Cardiac septum (tissue), 1 donor: ENCODE measurements at regions of chr1 and their contacts with region 1.

Region 1: DNA sequence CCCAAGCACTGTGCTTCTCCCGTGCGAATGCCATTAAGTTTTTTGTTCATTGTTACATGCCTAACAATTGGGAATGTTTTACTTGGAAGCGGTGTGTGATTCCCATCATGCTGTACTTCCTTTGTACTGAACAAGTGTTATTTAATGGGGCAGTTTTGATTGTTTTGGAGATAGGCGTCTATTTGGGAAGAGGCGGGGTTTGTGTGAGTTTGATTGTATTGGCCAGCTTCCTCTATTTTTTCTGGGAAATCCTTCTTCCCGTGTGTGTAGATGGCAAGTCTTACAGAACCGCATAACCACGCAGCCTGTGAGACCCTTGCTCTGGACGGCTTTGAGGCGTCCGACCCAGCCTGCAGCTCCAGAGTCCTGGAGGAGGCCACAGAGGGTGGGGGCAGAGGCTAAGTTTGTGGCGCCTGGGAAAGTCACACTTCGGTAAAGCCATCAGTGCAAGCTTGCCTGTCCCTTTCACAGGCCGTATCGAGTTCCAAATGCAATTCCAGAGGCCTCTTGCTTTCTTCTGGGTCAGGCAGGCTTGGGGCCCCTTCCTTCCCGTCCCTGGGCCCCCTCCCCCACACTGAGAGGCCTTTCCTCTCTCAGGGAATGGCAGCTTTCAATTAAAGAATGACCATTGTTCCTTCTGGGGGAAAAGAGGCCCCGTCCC is 210.3 kb downstream of the TOMM20 start:
- DNase-seq: peak; percentile 75

Region 2: DNA sequence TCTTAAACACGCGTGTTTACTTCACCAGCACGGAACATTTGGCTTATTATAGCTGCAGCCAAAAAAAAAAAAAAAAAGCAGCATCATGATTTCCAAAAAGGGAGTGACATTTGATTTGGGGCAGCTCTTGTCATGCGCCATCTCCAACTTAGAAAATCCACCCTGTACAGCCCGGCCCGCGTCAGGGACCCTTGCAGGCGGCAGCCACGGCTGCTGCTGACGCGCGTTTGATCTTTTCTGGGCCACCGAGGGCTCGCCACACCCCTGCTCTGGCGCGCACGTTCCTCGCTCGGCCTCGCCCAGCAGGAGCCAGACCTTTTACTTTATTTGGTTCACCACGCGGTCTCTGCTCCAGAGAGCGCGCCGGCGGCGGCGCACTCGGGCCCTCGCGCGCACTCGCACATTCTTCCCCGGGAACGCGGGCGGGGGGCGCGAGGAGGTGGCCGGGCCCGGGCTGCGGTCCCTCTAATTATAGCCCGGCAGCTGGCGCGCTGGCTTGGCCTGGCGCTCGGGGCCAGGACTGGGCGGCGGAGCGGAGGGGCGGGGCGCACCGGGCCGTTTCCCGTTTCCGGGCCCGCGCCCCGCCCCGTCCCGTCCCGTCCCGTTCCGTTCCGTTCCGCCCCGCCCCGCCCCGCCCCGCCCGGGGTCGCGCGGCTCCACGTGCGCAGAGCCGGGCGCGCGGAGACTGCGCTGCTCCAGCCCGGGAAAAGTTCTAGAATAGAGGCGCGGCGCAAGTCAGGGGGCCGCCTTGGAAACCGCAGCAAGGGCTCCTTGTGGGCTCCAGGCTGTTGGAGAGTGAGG is 318.5 kb before region 1 on chr1:
- intact Hi-C with region 1: loop called (anchors 5 kb)
- DNase-seq: peak; percentile 94

Region 3: GRCh38 chr1:234963180-234963903 is 45.0 kb after region 1 on chr1:
- intact Hi-C with region 1: loop called (anchors 5 kb)
- DNase-seq: peak; percentile 94

Region 4: GRCh38 chr1:234978397-234979295 is 60.3 kb after region 1 on chr1:
- intact Hi-C with region 1: loop called (anchors 5 kb)
- DNase-seq: peak; percentile 76

Region 5: GRCh38 chr1:234997201-234997895 is 79.0 kb after region 1 on chr1:
- intact Hi-C with region 1: loop called (anchors 2 kb)
- DNase-seq: peak; percentile 97

Region 6: DNA sequence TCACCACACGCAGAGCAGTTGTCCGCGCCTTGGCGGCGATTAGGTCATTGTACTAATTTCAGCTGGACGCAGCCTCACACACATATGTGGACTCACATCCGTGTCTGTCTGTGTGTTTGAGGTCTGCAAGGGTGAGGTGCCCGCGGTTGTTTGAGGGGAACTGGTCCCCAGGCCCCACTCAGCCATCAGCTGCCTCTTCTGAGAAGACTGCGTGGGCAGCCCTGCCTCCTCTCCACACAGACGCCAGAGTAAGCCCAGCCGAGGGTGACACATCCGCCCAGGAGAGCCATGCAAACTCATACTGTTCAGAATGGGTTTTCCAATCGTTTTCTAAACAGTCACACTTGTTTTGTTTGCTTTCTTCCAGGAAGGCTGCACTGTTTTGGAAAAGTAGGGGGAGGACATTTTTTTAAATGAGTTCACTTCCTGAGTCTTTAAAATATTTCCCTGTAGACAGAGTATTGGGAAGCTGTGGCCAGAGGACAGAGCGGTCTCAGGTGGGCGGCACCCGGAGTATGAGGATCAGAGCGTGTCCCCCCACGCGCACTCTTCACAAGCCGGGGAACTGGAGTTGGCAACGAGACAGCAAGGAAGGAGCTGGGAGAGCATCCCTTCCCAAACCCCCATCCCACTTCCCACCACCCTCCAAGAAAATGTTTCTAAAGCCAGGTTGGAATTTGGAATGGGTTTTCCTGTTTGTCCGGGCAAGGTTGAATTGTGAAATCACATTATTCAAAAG is 157.0 kb after region 1 on chr1:
- intact Hi-C with region 1: loop called (anchors 2 kb)
- DNase-seq: peak; percentile 89

Region 7: GRCh38 chr1:235122348-235122747 is 204.0 kb after region 1 on chr1:
- intact Hi-C with region 1: no loop called
- DNase-seq: no peak